Mammary epithelial cell (primary cell): ENCODE measurements at regions of chr1 and their contacts with region 1.

Region 1: GRCh38 chr1:93734999-93735398 is 53.4 kb upstream of the BCAR3 start:
- DNase-seq: no peak
- H3K4me3 ChIP-seq: no peak overlapping the region
- H3K27ac ChIP-seq: peak overlapping the region; percentile 47
- H3K4me1 ChIP-seq: peaks cover 66% of the 10 kb centered on the region
- H3K27me3 ChIP-seq: no peaks in the 10 kb centered on the region
- CTCF ChIP-seq: peak in 1 of 2 donors; percentile 23

Region 2: GRCh38 chr1:93591676-93592550 is 143.1 kb before region 1 on chr1:
- CTCF ChIA-PET with region 1: no interaction called
- dilution Hi-C with region 1: no loop called
- in situ Hi-C with region 1: no loop called
- intact Hi-C with region 1: no loop called
- DNase-seq: no peak
- H3K4me3 ChIP-seq: no peak overlapping the region
- H3K27ac ChIP-seq: no peak overlapping the region
- H3K4me1 ChIP-seq: peaks cover 70% of the 10 kb centered on the region
- H3K27me3 ChIP-seq: no peaks in the 10 kb centered on the region
- CTCF ChIP-seq: no peak

Region 3: GRCh38 chr1:93672069-93672468 is 62.9 kb before region 1 on chr1:
- CTCF ChIA-PET with region 1: no interaction called
- dilution Hi-C with region 1: loop called (anchors 5 kb)
- in situ Hi-C with region 1: no loop called
- intact Hi-C with region 1: no loop called
- DNase-seq: peak; percentile 42
- H3K4me3 ChIP-seq: no peak overlapping the region
- H3K27ac ChIP-seq: no peak overlapping the region
- H3K4me1 ChIP-seq: peaks cover 70% of the 10 kb centered on the region
- H3K27me3 ChIP-seq: no peaks in the 10 kb centered on the region
- CTCF ChIP-seq: no peak

Region 4: GRCh38 chr1:93692983-93693591 is 41.9 kb before region 1 on chr1:
- CTCF ChIA-PET with region 1: interaction called, 3 read pairs
- dilution Hi-C with region 1: no loop called
- in situ Hi-C with region 1: no loop called
- intact Hi-C with region 1: loop called (anchors 1 kb)
- DNase-seq: peak; percentile 97
- H3K4me3 ChIP-seq: peak overlapping the region in 1 of 3 experiments; percentile 4
- H3K27ac ChIP-seq: peak overlapping the region; percentile 100
- H3K4me1 ChIP-seq: peaks cover 53% of the 10 kb centered on the region
- H3K27me3 ChIP-seq: no peaks in the 10 kb centered on the region
- CTCF ChIP-seq: no peak

Region 5: DNA sequence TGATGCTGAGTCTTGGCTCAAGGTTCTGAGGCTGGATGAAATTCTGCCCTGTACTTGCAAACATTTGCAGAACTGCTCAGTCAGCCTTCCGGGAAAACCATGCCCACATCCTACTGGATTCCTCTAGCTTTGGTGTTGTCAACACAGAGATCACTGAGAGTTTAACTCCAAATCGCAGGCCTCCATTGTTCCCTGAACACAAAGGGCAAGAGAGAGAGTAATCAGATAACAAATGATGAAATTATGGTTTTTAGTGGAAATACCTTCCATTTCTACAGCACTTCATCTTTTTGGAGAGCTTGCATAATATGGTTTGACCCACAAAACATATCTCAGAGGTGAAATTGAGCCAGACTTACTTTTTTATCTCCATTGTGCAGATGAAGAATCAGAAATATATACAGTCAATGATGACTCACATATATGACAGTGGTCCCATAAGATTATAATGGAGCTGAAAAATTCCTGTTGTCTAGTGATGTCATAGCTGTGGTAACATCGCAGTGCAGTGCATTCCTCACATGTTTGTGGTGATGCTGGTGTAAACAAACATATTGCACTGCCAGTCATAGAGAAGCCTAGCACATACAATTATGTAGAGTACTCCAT is 19.3 kb after region 1 on chr1:
- CTCF ChIA-PET with region 1: interaction called, 3 read pairs
- dilution Hi-C with region 1: no loop called
- in situ Hi-C with region 1: no loop called
- intact Hi-C with region 1: loop called (anchors 1 kb)
- DNase-seq: peak; percentile 77
- H3K4me3 ChIP-seq: no peak overlapping the region
- H3K27ac ChIP-seq: peak overlapping the region; percentile 86
- H3K4me1 ChIP-seq: peaks cover 65% of the 10 kb centered on the region
- H3K27me3 ChIP-seq: no peaks in the 10 kb centered on the region
- CTCF ChIP-seq: no peak

Region 6: DNA sequence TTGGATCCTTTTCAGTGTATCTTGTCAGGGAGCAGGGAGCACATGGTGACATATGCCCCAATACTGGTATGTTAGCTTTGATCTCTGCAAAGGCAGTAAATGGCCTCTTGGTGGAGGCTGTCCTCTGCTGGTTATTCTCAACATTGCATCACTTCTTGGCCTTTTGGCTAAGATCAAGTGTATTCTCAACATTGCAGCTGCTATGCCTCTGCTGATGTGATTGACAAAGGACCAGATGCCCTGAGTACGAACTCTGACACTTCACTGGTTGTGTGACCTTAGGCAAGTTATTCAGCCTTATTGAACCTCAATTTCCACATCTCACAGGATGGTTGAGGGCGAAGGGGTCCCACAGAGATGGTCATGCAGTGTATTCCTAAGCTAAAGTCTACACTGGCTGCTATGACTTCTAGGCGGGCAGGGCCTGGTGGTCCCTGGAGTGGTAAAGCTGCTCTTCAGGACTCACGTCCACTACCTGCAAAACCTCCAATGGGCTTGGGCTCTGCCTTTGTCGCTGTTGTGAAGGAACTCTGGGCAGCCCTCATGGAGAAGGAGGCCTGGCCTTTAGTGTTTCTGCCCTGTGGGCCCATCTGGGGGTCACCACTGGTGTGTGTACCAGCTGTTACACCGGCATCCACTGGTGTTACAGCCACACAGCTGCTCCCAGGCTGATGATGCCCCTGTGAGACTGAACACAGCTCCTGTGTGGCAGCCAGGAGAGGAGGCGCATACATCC is 79.2 kb after region 1 on chr1:
- CTCF ChIA-PET with region 1: interaction called, 18 read pairs
- dilution Hi-C with region 1: no loop called
- in situ Hi-C with region 1: no loop called
- intact Hi-C with region 1: loop called (anchors 1 kb)
- DNase-seq: peak; percentile 78
- H3K4me3 ChIP-seq: no peak overlapping the region
- H3K27ac ChIP-seq: peak overlapping the region; percentile 76
- H3K4me1 ChIP-seq: peaks cover 75% of the 10 kb centered on the region
- H3K27me3 ChIP-seq: no peaks in the 10 kb centered on the region
- CTCF ChIP-seq: peak; percentile 100